AG04450 (cell line): ENCODE measurements at regions of chr3 and their contacts with region 1.

Region 1: DNA sequence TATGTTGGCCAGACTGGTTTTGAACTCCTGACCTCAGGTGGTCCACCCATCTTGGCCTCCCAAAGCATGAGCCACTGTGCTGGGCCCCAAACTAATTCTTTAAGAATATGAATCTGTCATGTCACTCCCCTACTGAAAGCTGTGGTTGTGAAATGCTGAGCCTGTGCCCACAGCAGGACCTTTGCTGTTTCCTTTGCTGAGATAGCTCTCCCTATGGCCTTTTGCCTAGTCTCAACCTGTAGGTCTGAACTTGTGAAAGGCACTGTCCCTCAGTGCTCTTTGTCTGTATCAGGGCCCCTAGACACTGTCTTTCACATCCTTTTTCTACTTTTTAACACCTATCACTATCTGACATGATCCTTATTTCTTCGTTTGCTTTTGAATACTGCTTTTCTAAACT is 62.7 kb upstream of the CCR4 start:
- DNase-seq: no peak
- H3K4me3 ChIP-seq: no peak overlapping the region
- H3K27ac ChIP-seq: no peak overlapping the region
- H3K27me3 ChIP-seq: peaks cover 16% of the 10 kb centered on the region
- CTCF ChIP-seq: no peak

Region 2: GRCh38 chr3:32983124-32983523 is 94.4 kb after region 1 on chr3:
- CTCF ChIA-PET with region 1: no interaction called
- POLR2A ChIA-PET with region 1: no interaction called
- DNase-seq: no peak
- H3K4me3 ChIP-seq: no peak overlapping the region
- H3K27ac ChIP-seq: no peak overlapping the region
- H3K27me3 ChIP-seq: no peaks in the 10 kb centered on the region
- CTCF ChIP-seq: no peak

Region 3: DNA sequence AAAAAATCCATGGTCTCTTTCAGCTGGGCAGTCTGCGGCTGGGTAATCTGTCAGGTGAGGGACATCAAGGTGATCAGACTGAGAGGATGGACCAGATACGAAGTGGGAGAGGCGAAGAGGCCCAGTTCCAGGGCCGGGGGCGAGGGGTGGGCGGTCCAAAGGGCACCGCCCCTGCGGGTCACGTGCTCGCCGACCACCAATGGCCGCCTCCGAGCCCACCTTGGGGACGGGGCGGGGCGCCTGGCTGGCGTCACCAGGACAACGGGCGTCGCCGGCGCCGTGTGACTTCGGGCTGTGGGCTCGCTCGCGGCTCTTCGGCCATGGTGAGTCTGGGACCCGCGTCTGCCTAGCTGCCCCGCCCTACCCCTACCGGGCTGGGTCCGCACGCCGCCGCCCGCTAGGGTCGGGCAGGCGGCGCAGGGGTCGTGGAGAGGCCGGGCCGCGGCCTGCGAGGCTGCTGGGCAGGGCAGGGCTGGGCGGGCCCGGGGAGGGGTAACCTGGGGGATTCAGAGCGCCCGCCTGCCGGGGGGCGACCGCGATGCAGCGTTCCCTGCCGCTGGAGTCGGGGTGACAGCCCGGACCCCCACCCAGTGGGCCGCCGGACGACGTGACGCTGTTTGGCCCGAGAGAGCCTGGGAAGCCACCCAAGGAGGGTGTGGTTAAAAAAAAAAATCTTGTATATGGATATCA is 388.6 kb after region 1 on chr3 and contains the start of gene FBXL2:
- CTCF ChIA-PET with region 1: no interaction called
- POLR2A ChIA-PET with region 1: interaction called, 10 read pairs
- DNase-seq: peak; percentile 2
- H3K4me3 ChIP-seq: peak within 1 kb of the TSS; percentile 63
- H3K27ac ChIP-seq: no peak within 1 kb of the TSS
- H3K27me3 ChIP-seq: no peaks in the 10 kb centered on the region
- CTCF ChIP-seq: no peak
- polyA plus RNA-seq, gene FBXL2: 14.4 and 14.9 TPM in 2 replicates